AG04449 (cell line): ENCODE measurements at regions of chr6 and their contacts with region 1.

Region 1: GRCh38 chr6:17281100-17281494 is at the start of gene RBM24:
- DNase-seq: no peak
- H3K4me3 ChIP-seq: peak within 1 kb of the TSS; percentile 90
- CTCF ChIP-seq: peak; percentile 56

Region 2: GRCh38 chr6:17269840-17270239 is 11.3 kb before region 1 on chr6:
- CTCF ChIA-PET with region 1: interaction called, 16 read pairs
- POLR2A ChIA-PET with region 1: interaction called, 5 read pairs
- DNase-seq: peak; percentile 62
- H3K4me3 ChIP-seq: no peak overlapping the region
- CTCF ChIP-seq: no peak

Region 3: DNA sequence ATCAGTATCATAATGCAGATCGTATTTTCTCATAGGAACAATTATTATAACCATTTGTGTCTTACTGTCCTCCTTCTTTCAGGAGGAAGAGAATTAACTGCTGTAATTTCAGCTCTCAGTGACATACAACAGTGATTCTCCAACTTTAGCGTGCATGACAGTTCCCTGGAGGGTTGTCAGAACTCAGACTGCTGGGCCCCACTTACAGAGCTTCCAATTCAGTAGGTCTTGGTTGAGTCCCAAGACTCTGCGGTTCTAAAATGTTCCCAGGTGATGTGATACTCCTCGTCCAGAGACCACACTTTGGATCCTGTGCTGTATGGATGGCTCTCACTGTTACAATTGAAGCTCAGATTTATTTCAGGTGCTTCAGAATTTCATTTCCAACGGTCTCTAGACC is 185.1 kb after region 1 on chr6:
- CTCF ChIA-PET with region 1: no interaction called
- POLR2A ChIA-PET with region 1: no interaction called
- DNase-seq: no peak
- H3K4me3 ChIP-seq: no peak overlapping the region
- CTCF ChIP-seq: no peak

Region 4: DNA sequence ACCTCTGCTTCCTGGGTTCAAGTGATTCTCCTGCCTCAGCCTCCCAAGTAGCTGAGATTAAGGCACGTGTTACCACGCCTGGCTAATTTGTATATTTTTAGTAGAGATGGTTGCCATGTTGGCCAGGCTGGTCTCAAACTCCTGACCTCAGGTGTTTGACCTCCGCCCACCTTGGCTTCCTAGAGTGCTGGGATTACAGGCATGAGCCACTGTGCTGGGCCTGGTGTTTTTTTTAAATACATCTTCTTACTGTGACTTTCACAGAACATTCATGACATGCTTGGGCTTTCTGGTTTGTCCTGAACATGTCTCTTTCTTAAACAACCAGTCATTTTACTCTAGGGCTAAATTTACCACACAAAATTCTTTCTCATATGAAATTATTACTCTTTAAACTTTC is 284.3 kb after region 1 on chr6:
- CTCF ChIA-PET with region 1: no interaction called
- POLR2A ChIA-PET with region 1: no interaction called
- DNase-seq: no peak
- H3K4me3 ChIP-seq: no peak overlapping the region
- CTCF ChIP-seq: no peak